ENCODE measurements at regions of chr1 and their contacts with region 1.

Region 1: DNA sequence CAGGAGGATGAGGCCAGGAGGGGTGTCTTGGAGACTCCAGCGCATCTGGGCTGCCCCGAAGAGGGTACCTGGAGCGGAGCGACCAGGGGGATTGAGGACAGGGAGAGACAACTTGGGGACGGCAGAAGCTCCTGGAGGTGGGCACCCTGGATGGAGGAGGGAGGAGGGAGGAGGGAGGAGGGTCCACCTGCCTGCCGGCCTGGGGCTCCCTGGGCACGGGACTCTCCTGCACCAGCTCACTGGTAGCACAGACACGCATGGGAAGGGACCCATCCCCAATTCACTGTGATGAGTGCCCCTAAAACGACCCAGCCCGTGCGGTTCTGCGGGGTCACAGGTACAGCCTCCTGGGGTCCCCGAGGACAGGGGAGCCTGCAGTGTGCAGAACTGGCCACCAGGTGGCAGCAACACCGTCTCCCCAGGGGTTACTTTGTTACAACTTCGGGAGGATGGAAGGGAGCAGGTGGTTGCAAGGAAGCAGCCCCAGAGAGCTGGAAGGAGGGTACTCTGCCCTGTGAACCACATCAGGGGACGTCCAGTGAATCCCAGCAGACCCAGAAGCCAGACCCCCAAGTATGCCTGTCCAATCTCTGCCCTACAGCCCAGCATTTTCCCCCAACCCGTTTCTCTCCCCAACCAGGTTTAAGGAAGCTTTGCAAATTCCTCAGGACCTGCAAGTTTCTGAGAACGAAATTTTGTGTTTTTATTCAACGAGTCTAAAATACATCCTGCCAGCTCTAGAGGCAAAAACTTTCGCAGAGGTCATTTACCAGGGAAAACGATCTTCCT is 482.4 kb downstream of the NPHP4 start:
- DNase-seq: peak; percentile 72 to 79
- H3K4me3 ChIP-seq: no peak overlapping the region
- H3K27ac ChIP-seq: no peak overlapping the region
- H3K4me1 ChIP-seq: peaks cover 7 to 16% (median 14%) of the 10 kb centered on the region in 4 donors
- H3K27me3 ChIP-seq: peaks cover 0 to 49% (median 4%) of the 10 kb centered on the region in 3 donors
- CTCF ChIP-seq: peak in 6 of 7 experiments; percentile 56 to 98 (median 96)
- EP300 ChIP-seq: no peak
- POLR2A ChIP-seq: no peak

Region 2: GRCh38 chr1:5745776-5746610 is 236.1 kb after region 1 on chr1:
- intact Hi-C with region 1: loop called (anchors 10 kb)
- DNase-seq: peak; percentile 59 to 89
- H3K4me3 ChIP-seq: no peak overlapping the region
- H3K27ac ChIP-seq: no peak overlapping the region
- H3K4me1 ChIP-seq: peaks cover 0 to 13% (median 0%) of the 10 kb centered on the region in 4 donors
- H3K27me3 ChIP-seq: peaks cover 0 to 84% (median 17%) of the 10 kb centered on the region in 3 donors
- CTCF ChIP-seq: peak in 5 of 7 experiments; percentile 74 to 88 (median 78)
- EP300 ChIP-seq: no peak
- POLR2A ChIP-seq: no peak